ENCODE measurements at regions of chr12 and their contacts with region 1.

Region 1: DNA sequence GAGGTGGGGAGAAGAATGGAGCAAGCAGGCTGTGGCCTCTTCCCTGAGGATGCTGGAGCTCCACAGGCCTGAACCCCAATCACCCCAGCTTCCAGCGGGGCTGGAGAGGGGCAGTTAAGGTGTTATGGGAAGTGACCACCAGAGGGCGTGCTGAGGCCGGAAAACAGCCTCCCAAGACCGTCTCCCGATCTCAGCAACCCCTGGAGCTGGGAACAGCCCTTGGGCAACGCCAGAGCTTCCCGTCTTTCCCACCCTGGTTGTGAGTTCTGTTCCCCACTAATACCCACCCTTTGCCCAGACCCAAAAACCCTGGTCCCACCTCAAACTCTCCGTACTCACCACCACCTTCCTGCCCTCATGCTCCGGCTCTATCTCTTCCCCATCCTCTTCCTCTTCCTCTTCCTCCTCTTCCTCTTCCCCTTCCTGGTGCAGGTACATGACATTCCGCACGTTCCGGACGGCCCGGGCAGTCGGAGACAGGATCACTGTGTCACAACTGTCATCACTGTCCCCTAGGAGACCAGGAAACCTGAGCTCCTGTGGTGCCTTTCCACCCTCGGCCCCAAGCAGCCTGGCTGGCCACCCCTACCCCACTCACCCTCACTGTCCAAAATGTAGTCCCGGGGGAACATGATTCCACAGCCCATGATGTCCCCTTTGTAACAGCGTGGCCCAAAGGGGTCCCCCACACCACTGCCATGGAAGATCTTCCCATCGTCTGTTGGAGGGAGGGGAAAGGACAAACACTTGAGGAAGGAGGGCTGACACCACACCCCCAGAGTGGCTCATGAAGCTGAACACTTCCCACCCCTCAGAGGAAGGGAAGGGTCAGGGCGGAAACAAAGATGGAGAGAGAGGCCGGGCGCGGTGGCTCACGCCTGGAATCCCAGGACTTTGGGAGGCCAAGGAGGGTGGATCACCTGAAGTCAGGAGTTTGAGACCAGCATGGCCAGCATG is 12.9 kb downstream of the SPRYD3 start:
- DNase-seq: peak; percentile 65
- H3K4me3 ChIP-seq: no peak overlapping the region
- H3K27ac ChIP-seq: peak overlapping the region; percentile 44
- H3K4me1 ChIP-seq: peaks cover 22% of the 10 kb centered on the region
- H3K27me3 ChIP-seq: no peaks in the 10 kb centered on the region
- CTCF ChIP-seq: peak; percentile 85 to 90
- POLR2A ChIP-seq: peak; percentile 39

Region 2: GRCh38 chr12:53039851-53040250 is 26.4 kb before region 1 on chr12:
- CTCF ChIA-PET with region 1: interaction called, 23 read pairs
- POLR2A ChIA-PET with region 1: no interaction called
- dilution Hi-C with region 1: no loop called
- intact Hi-C with region 1: no loop called
- DNase-seq: no peak
- H3K4me3 ChIP-seq: no peak overlapping the region
- H3K27ac ChIP-seq: no peak overlapping the region
- H3K4me1 ChIP-seq: peaks cover 30% of the 10 kb centered on the region
- H3K27me3 ChIP-seq: no peaks in the 10 kb centered on the region
- CTCF ChIP-seq: no peak
- POLR2A ChIP-seq: no peak

Region 3: GRCh38 chr12:53079226-53080117 is 13.2 kb after region 1 on chr12 and contains the start of gene SPRYD3:
- CTCF ChIA-PET with region 1: interaction called, 91 read pairs
- POLR2A ChIA-PET with region 1: interaction called, 5 read pairs
- dilution Hi-C with region 1: no loop called
- intact Hi-C with region 1: no loop called
- DNase-seq: peak; percentile 98
- H3K4me3 ChIP-seq: peak within 1 kb of the TSS; percentile 68 to 87 (median 80)
- H3K27ac ChIP-seq: peak within 1 kb of the TSS; percentile 52
- H3K4me1 ChIP-seq: peaks cover 9% of the 10 kb centered on the region
- H3K27me3 ChIP-seq: no peaks in the 10 kb centered on the region
- CTCF ChIP-seq: no peak
- POLR2A ChIP-seq: peak; percentile 98
- total RNA-seq, gene SPRYD3: 31.7 and 39.2 TPM in 2 replicates

Region 4: DNA sequence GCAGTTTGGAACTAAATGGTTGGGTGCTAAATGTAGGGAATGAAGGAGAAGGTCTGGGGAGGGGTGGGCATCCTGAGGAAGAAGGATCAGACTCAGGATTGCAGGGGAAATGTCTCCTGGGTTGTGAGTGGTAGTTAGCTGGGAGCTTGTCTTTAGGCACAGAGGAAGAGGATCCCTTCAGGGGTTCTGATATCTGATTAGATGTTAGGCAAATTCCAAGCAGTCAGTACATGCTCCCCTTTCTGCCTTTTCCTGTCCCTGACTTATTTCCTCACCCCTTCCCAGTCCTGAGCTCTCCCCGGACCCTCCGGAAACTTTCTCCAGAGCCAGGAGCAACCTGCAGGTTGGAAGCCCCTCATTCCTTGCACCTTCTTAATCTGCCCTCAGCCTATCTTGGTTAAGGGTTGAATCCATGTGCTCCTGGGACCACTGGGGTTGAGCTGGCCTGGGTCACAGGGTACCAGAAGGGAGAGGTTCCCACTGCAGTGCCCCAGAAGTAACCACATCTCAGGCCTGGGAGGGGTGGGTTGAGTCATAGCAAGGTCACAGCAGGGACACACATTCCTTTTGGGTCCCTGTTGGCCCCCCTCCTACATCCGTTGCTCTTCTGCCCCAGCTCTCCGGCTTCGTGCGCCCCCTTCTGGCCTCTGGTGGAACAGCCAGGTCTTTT is 32.9 kb after region 1 on chr12:
- CTCF ChIA-PET with region 1: interaction called, 463 read pairs
- POLR2A ChIA-PET with region 1: interaction called, 9 read pairs
- dilution Hi-C with region 1: no loop called
- intact Hi-C with region 1: loop called (anchors 1 kb)
- DNase-seq: peak; percentile 83
- H3K4me3 ChIP-seq: no peak overlapping the region
- H3K27ac ChIP-seq: peak overlapping the region; percentile 50
- H3K4me1 ChIP-seq: peaks cover 27% of the 10 kb centered on the region
- H3K27me3 ChIP-seq: no peaks in the 10 kb centered on the region
- CTCF ChIP-seq: peak; percentile 94 to 95
- POLR2A ChIP-seq: peak; percentile 53

Region 5: GRCh38 chr12:53180220-53180930 is 114.1 kb after region 1 on chr12 and contains the starts of genes CSAD and ZNF740:
- CTCF ChIA-PET with region 1: interaction called, 35 read pairs
- POLR2A ChIA-PET with region 1: interaction called, 4 read pairs
- dilution Hi-C with region 1: no loop called
- intact Hi-C with region 1: no loop called
- DNase-seq: peak; percentile 96
- H3K4me3 ChIP-seq: peak within 1 kb of the TSS; percentile 60 to 91 (median 73)
- H3K27ac ChIP-seq: peak within 1 kb of the TSS; percentile 50
- H3K4me1 ChIP-seq: peaks cover 22% of the 10 kb centered on the region
- H3K27me3 ChIP-seq: no peaks in the 10 kb centered on the region
- CTCF ChIP-seq: no peak
- POLR2A ChIP-seq: peak; percentile 87
- total RNA-seq, gene CSAD: 21.1 and 22.0 TPM in 2 replicates
- total RNA-seq, gene ZNF740: 34.9 and 38.1 TPM in 2 replicates

Region 6: GRCh38 chr12:53213348-53213747 is 147.1 kb after region 1 on chr12:
- CTCF ChIA-PET with region 1: interaction called, 15 read pairs
- POLR2A ChIA-PET with region 1: no interaction called
- dilution Hi-C with region 1: no loop called
- intact Hi-C with region 1: no loop called
- DNase-seq: peak; percentile 69
- H3K4me3 ChIP-seq: no peak overlapping the region
- H3K27ac ChIP-seq: no peak overlapping the region
- H3K4me1 ChIP-seq: peaks cover 31% of the 10 kb centered on the region
- H3K27me3 ChIP-seq: no peaks in the 10 kb centered on the region
- CTCF ChIP-seq: peak; percentile 87 to 95
- POLR2A ChIP-seq: no peak

Measured in endothelial cell of umbilical vein (primary cell).